Activated B cell treated with CpG ODN at 0.5 μM for 24 hours (primary cell): ENCODE measurements at regions of chr5 and their contacts with region 1.

Region 1: GRCh38 chr5:138464008-138464387 is 1.3 kb upstream of the EGR1 start:
- DNase-seq: peak; percentile 92
- ATAC-seq: peak; percentile 56
- H3K4me3 Mint-ChIP-seq: peak overlapping the region; percentile 89
- H3K27ac Mint-ChIP-seq: peak overlapping the region; percentile 92
- H3K4me1 Mint-ChIP-seq: peaks cover 49% of the 10 kb centered on the region
- H3K27me3 Mint-ChIP-seq: no peaks in the 10 kb centered on the region
- CTCF ChIP-seq: peak; percentile 87

Region 2: GRCh38 chr5:138337685-138338410 is 126.2 kb before region 1 on chr5 and contains the start of gene FAM53C:
- CTCF ChIA-PET with region 1: no interaction called
- POLR2A ChIA-PET with region 1: interaction called, 7 read pairs
- intact Hi-C with region 1: loop called (anchors 1 kb)
- DNase-seq: peak; percentile 97
- ATAC-seq: peak; percentile 81
- H3K4me3 Mint-ChIP-seq: peak within 1 kb of the TSS; percentile 90
- H3K27ac Mint-ChIP-seq: peak within 1 kb of the TSS; percentile 100
- H3K4me1 Mint-ChIP-seq: peaks cover 37% of the 10 kb centered on the region
- H3K27me3 Mint-ChIP-seq: no peaks in the 10 kb centered on the region
- CTCF ChIP-seq: no peak
- total RNA-seq, gene FAM53C: 23.5 and 24.9 TPM in 2 replicates

Region 3: GRCh38 chr5:138449501-138450239 is 14.3 kb before region 1 on chr5:
- CTCF ChIA-PET with region 1: interaction called, 11 read pairs
- POLR2A ChIA-PET with region 1: interaction called, 14 read pairs
- intact Hi-C with region 1: loop called (anchors 1 kb)
- DNase-seq: peak; percentile 75
- ATAC-seq: peak; percentile 98
- H3K4me3 Mint-ChIP-seq: no peak overlapping the region
- H3K27ac Mint-ChIP-seq: no peak overlapping the region
- H3K4me1 Mint-ChIP-seq: peaks cover 6% of the 10 kb centered on the region
- H3K27me3 Mint-ChIP-seq: peaks cover 4% of the 10 kb centered on the region
- CTCF ChIP-seq: peak; percentile 59

Region 4: DNA sequence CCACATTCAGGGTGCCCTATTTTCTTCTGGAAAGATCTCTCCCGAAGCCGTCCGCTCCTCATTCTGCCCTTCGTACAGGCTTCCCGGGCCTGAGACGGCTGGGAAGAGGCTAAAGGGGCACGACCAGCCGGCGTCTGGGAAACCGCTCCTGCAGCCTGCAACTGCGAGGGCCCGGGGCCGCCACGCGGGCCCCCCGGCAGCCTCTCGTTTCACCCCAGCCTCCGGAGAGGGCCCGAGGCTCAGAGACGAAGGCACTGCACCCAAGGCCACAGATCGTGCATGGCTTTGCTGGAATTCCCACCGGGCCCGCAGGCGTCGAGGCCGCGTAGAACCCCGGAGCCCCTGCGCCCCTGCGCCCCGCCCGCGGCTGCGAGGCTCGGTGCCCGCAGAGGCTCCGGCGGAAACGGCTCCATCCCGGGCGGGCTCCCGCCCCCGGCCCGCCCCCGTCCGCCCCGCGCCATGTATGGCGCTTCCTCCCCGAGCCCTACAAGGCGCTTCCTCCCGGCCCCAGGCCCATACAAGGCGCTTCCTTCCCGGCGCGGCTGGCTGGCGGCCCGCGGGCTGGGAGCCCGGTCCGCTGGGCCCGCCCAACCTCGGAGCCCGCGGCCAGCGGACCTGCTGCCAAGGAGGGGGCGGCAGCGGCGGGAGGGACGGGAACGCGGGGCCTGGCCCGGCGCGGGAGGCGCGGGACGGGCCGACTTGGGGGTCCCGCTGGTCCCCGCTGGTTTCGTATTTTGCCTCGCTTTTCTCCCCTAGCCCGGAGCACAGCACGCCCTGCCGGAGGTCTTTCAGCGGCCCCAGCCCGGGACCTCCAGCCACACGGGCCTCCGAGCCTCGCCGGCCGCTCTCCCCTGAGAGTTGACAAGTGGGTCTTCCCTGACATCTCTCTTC is 27.9 kb after region 1 on chr5:
- CTCF ChIA-PET with region 1: interaction called, 9 read pairs
- POLR2A ChIA-PET with region 1: interaction called, 6 read pairs
- intact Hi-C with region 1: loop called (anchors 1 kb)
- DNase-seq: peak; percentile 77
- ATAC-seq: peak; percentile 100
- H3K4me3 Mint-ChIP-seq: peak overlapping the region; percentile 87
- H3K27ac Mint-ChIP-seq: no peak overlapping the region
- H3K4me1 Mint-ChIP-seq: peaks cover 4% of the 10 kb centered on the region
- H3K27me3 Mint-ChIP-seq: peaks cover 24% of the 10 kb centered on the region
- CTCF ChIP-seq: no peak

Region 5: GRCh38 chr5:138503487-138504270 is 39.7 kb after region 1 on chr5:
- CTCF ChIA-PET with region 1: interaction called, 6 read pairs
- POLR2A ChIA-PET with region 1: interaction called, 7 read pairs
- intact Hi-C with region 1: loop called (anchors 1 kb)
- DNase-seq: no peak
- ATAC-seq: peak; percentile 81
- H3K4me3 Mint-ChIP-seq: no peak overlapping the region
- H3K27ac Mint-ChIP-seq: no peak overlapping the region
- H3K4me1 Mint-ChIP-seq: no peaks in the 10 kb centered on the region
- H3K27me3 Mint-ChIP-seq: no peaks in the 10 kb centered on the region
- CTCF ChIP-seq: no peak

Region 6: DNA sequence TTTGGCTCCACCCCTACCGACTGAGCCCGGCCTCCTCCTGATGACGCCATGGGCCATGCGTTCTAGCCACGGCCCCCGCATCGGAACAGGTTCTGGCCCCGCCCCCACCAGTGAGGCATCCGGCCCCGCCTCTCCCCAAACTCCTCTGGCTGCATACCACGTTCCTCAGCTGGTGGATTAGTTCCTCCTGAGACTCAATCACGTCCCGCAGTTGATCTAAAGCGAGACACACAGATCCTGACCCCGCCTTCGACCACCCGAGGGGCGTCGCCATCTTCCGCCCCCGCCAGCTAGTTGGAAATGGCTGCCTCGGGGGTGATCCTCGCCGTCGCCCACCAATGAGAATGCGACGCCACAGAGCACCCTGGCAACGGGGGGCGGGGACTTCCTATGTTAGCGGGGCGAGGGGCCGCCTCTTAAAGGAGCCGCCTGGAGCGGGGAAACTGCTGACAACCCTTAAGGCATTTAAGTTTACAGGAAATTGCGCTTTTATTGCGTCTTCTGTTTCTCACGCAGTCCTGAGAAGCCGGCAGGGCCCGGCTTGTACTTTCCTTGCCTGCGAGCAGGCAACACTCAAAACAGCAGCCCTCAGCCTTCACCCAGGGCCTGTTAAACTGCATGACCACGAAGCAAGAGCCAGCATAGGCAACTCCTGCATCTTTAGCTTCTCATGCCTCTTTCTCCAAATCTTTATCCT is 939.9 kb after region 1 on chr5 and contains the start of gene SPATA24:
- CTCF ChIA-PET with region 1: no interaction called
- POLR2A ChIA-PET with region 1: no interaction called
- intact Hi-C with region 1: loop called (anchors 10 kb)
- DNase-seq: peak; percentile 93
- ATAC-seq: peak; percentile 84
- H3K4me3 Mint-ChIP-seq: peak within 1 kb of the TSS; percentile 90
- H3K27ac Mint-ChIP-seq: peak within 1 kb of the TSS; percentile 96
- H3K4me1 Mint-ChIP-seq: peaks cover 53% of the 10 kb centered on the region
- H3K27me3 Mint-ChIP-seq: no peaks in the 10 kb centered on the region
- CTCF ChIP-seq: no peak
- total RNA-seq, gene SPATA24: 6.4 and 9.3 TPM in 2 replicates

Region 7: GRCh38 chr5:140302786-140303639 is 1839.0 kb after region 1 on chr5 and contains the start of gene PFDN1:
- CTCF ChIA-PET with region 1: no interaction called
- POLR2A ChIA-PET with region 1: no interaction called
- intact Hi-C with region 1: loop called (anchors 5 kb)
- DNase-seq: peak; percentile 76
- ATAC-seq: peak; percentile 99
- H3K4me3 Mint-ChIP-seq: peak within 1 kb of the TSS; percentile 99
- H3K27ac Mint-ChIP-seq: peak within 1 kb of the TSS; percentile 97
- H3K4me1 Mint-ChIP-seq: peaks cover 21% of the 10 kb centered on the region
- H3K27me3 Mint-ChIP-seq: peaks cover 3% of the 10 kb centered on the region
- CTCF ChIP-seq: no peak
- total RNA-seq, gene PFDN1: 38.2 and 38.4 TPM in 2 replicates